HAP-1 (cell line): ENCODE measurements at regions of chrX and their contacts with region 1.

Region 1: DNA sequence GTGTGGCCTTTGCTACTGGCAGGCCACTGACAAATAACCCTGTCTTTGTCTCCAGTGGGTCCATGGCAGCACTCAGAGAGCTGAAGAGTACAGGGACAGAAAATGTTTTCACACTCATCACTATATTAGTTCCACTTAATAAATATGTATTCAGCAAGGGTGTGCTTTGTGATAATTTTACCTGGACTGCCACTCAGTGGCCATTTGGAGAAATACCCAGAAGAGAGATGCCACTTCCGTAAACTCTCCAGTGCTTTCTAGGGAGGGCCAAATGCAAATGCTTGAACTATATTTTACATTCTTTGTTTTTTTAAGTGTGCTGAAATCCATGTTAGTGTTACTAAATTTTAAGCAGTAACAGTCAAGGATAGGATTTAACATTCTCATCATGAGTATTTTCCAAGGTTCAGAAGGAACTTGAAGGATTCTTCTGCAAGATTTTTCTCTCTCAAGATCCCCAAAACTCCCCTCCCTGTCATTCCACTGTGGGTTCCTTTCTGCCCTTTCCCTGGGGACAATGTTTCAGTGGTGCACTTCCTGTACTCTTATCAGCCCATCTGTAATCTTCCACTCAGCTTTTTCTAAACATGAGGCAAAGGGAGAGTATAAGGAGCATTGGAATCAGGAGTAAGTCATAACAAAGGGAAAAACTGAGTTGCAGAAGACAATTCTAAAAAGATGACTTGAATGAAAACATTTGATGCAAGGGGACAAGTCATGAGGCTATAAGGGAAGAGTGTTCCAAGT is 46.0 kb downstream of the TFDP3 start:
- DNase-seq: peak; percentile 45 to 73
- H3K4me3 ChIP-seq: no peak overlapping the region
- H3K4me1 ChIP-seq: peaks cover 11% of the 10 kb centered on the region
- H3K27me3 ChIP-seq: no peaks in the 10 kb centered on the region

Region 2: DNA sequence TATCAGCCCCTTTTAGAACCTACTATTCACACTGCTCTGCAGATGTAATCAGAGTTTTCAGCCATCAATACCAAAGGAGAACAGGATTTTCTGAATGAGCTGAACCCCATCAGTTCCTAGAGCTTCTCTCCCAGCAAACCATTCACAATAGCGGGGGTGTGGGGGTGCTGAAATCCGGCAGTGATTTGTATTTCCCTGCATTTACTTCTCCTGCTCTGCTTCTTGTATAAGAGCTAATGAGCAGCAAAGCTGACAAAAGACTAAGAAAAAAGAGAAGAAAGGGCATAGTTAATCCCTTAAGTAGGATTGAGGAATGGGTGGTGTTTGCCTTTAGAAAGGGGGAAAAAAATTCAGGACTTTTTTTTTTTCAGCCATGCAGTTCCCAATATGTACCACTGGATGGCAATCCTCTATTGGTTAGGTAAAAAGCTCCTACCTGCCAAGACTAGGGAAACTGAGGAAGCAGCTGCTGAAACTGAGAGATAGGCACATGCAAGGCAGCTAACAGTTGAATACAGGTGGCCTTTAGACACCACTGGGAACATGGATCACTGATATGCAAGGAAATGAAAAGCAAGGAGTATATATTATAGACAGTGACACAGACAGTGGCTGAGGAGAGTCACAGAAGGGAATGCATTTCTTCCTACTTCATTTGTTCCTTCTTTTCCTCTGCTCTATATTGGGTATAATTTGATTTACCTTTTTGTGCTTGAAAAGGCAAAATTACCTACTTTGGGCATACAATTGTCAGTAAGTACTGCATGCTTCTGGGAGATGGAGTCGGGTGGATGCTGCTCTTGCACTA is 431.6 kb before region 1 on chrX:
- in situ Hi-C with region 1: loop called (anchors 25 kb)
- DNase-seq: peak; percentile 82 to 98
- H3K4me3 ChIP-seq: no peak overlapping the region
- H3K4me1 ChIP-seq: peaks cover 37% of the 10 kb centered on the region
- H3K27me3 ChIP-seq: no peaks in the 10 kb centered on the region

Region 3: DNA sequence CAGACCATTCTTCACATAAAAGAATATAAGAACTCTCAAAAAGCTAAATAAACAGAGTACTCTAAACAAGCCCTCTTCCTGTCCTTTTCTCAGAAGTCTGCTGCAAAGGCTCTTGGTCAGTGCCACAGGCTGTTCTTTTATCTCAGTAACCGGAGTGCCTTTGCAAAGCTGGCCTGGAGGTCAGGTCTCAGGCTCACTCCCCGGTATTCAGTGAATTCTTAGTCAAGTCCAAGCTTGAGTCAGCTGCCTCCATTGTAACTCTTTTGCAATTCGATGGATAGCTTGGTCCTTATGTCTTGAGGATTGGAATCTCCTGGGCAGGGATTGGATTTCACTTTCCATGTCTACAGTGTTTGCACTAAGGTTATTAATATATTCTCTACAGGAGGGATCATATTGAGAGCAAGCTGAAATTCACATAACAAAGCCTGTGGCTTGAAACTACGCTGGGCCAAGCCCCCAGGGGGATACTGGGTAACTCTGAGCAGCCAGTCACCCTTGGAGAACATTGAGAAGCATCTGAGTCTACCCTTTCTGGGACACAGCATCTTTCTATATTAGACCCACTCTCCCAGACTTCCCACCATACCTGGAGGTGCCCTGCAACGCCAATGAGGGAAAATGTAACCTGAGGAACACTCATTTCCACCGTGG is 203.7 kb before region 1 on chrX:
- in situ Hi-C with region 1: loop called (anchors 10 kb)
- DNase-seq: peak; percentile 78 to 81
- H3K4me3 ChIP-seq: no peak overlapping the region
- H3K4me1 ChIP-seq: peaks cover 22% of the 10 kb centered on the region
- H3K27me3 ChIP-seq: peaks cover 1% of the 10 kb centered on the region; the same call in 1 of the 2 replicates

Region 4: DNA sequence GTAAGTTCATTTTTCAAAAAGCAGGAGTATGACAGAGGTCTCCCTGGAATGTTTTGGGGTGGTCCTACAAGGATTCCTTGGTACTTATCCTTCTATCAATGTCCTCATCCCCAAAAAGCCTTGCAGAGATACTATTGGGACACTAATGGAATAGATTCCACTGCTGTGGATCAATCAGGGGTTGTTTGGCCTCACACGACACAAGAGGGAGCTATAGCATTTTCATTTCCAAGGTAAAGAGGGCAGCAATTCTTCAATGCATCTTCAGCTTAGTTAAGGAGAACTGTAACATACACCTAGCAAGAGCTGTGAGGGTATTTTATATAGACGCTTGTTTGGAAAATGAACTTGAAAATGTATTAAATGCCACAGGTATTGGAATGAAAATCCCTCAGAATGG is 126.1 kb before region 1 on chrX:
- in situ Hi-C with region 1: loop called (anchors 10 kb)
- DNase-seq: peak; percentile 60 to 84
- H3K4me3 ChIP-seq: no peak overlapping the region
- H3K4me1 ChIP-seq: peaks cover 20% of the 10 kb centered on the region
- H3K27me3 ChIP-seq: no peaks in the 10 kb centered on the region